ENCODE measurements at regions of chr1 and their contacts with region 1.

Region 1: DNA sequence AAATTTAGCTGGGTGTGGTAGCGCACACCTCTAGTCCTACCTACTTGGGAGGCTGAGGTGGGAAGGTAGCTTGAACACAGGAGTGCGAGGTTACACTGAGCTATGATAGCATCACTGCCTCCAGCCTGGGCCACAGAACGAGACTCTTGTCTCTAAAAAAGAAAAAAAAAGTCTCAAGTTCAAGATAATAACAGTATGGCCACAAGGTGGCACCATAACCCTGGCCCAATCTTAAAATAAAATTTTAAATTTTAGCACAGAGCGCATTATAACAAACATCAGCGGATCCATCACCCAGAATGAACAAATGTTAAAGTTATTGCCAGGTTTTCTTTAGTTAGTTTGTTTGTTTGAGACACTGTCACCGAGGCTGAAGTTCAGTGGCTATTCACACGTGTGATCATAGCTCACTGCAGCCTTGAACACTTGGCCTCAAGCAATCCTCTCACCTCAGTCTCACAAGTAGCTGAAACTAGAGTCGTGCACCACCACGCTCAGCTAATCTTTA is 2.9 kb upstream of the HTR6 start:
- DNase-seq: peak; percentile 57
- H3K4me3 ChIP-seq: no peak overlapping the region
- H3K27ac ChIP-seq: no peak overlapping the region
- H3K4me1 ChIP-seq: peaks cover 3% of the 10 kb centered on the region
- H3K27me3 ChIP-seq: peaks cover 26 to 38% of the 10 kb centered on the region in 2 experiments
- CTCF ChIP-seq: peak; percentile 36 to 56
- POLR2A ChIP-seq: no peak

Region 2: DNA sequence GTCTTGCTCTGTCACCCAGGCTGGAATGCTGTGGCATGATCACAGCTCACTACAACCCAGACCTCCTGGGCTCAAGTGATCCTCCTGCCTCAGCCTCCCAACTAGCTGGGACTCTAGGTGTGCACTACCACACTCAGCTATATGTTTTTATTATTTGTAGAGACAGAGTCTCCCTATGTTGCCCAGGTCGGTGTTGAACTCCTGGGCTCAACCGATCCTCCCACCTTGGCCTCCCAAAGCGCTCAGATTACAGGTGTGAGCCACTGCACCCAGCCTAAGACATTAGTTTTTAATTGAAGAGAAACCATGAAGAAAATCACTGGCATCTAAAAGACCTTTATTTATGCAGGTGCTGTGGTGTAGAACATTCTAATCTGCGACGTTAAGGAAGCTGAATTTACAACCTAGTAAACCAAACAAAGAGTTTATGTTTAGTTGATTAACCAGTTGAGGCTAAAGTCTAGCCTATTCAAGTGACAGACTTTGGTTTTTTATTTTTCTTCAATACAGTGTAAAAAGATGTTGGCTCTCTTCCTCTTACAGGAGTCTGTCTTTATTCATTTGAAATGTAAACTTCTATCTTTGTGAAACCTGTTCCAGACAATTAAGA is 70.2 kb before region 1 on chr1:
- CTCF ChIA-PET with region 1: no interaction called
- POLR2A ChIA-PET with region 1: no interaction called
- dilution Hi-C with region 1: no loop called
- intact Hi-C with region 1: no loop called
- DNase-seq: no peak
- H3K4me3 ChIP-seq: no peak overlapping the region
- H3K27ac ChIP-seq: no peak overlapping the region
- H3K4me1 ChIP-seq: peaks cover 6% of the 10 kb centered on the region
- H3K27me3 ChIP-seq: peaks cover 9 to 11% of the 10 kb centered on the region in 2 experiments
- CTCF ChIP-seq: no peak
- POLR2A ChIP-seq: no peak

Region 3: DNA sequence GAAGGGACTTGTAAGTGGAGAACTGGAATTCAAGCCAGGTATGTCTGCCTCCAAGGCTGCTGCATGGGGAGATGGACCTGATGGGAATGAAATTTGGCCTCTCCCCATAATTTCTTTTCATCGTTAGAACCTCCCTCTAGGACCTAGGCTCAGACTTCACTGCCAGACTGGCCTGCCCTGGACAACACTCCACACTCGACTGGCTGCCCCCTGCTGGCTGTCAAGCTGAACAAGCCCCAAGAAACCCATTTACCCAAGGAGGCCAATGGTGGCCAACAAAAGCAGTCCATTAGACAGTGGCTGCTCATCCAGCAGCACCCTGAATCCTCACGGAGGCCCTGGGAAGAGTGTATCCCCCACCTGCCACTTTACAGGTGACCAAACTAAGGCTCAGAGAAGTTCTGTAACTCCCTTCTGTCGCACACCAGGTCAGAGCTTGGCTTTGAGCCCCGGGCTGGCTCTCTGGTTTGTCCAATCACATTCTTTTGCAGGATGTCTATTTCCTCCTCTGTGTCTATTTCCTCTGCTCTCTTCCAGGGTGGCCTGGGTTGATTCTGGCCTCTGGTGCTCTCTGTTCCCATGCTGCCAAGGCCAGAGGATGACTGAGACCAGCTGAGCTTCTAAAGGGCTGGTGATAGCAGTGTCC is 149.6 kb after region 1 on chr1:
- CTCF ChIA-PET with region 1: interaction called, 13 read pairs
- POLR2A ChIA-PET with region 1: no interaction called
- dilution Hi-C with region 1: no loop called
- intact Hi-C with region 1: loop called (anchors 1 kb)
- DNase-seq: peak; percentile 38
- H3K4me3 ChIP-seq: no peak overlapping the region
- H3K27ac ChIP-seq: no peak overlapping the region
- H3K4me1 ChIP-seq: no peaks in the 10 kb centered on the region
- H3K27me3 ChIP-seq: no peaks in the 10 kb centered on the region
- CTCF ChIP-seq: peak; percentile 65 to 79
- POLR2A ChIP-seq: no peak